Left lung (tissue), 14 donors: ENCODE measurements at regions of chr22 and their contacts with region 1.

Region 1: GRCh38 chr22:45994491-45995404 is 17.8 kb upstream of the WNT7B start:
- DNase-seq: peak; percentile 57 to 98 (median 78)
- ATAC-seq: peak; percentile 74
- H3K4me3 ChIP-seq: no peak overlapping the region
- H3K27ac ChIP-seq: no peak overlapping the region
- H3K4me1 ChIP-seq: peaks cover 34 to 46% of the 10 kb centered on the region in 2 donors
- H3K27me3 ChIP-seq: no peaks in the 10 kb centered on the region
- CTCF ChIP-seq: peak; percentile 97 to 98

Region 2: GRCh38 chr22:46116491-46116958 is 121.8 kb after region 1 on chr22:
- intact Hi-C with region 1: loop called in 1 of 2 experiments (anchors 10 kb)
- DNase-seq: peak; percentile 82 to 97 (median 92)
- ATAC-seq: peak; percentile 87
- H3K4me3 ChIP-seq: no peak overlapping the region
- H3K27ac ChIP-seq: peak overlapping the region; percentile 47 to 58
- H3K4me1 ChIP-seq: peaks cover 4 to 26% of the 10 kb centered on the region in 2 donors
- H3K27me3 ChIP-seq: no peaks in the 10 kb centered on the region
- CTCF ChIP-seq: peak; percentile 51 to 80

Region 3: GRCh38 chr22:46309526-46310085 is 314.9 kb after region 1 on chr22:
- intact Hi-C with region 1: loop called in 1 of 2 experiments (anchors 10 kb)
- DNase-seq: no peak
- ATAC-seq: no peak
- H3K4me3 ChIP-seq: no peak overlapping the region
- H3K27ac ChIP-seq: no peak overlapping the region
- H3K4me1 ChIP-seq: no peaks in the 10 kb centered on the region
- H3K27me3 ChIP-seq: no peaks in the 10 kb centered on the region
- CTCF ChIP-seq: no peak

Region 4: GRCh38 chr22:46399251-46399999 is 404.7 kb after region 1 on chr22:
- intact Hi-C with region 1: no loop called
- DNase-seq: no peak
- ATAC-seq: no peak
- H3K4me3 ChIP-seq: no peak overlapping the region
- H3K27ac ChIP-seq: no peak overlapping the region
- H3K4me1 ChIP-seq: no peaks in the 10 kb centered on the region
- H3K27me3 ChIP-seq: no peaks in the 10 kb centered on the region
- CTCF ChIP-seq: no peak